Activated B cell treated with CpG ODN at 0.5 μM for 24 hours (primary cell): ENCODE measurements at regions of chr4 and their contacts with region 1.

Region 1: DNA sequence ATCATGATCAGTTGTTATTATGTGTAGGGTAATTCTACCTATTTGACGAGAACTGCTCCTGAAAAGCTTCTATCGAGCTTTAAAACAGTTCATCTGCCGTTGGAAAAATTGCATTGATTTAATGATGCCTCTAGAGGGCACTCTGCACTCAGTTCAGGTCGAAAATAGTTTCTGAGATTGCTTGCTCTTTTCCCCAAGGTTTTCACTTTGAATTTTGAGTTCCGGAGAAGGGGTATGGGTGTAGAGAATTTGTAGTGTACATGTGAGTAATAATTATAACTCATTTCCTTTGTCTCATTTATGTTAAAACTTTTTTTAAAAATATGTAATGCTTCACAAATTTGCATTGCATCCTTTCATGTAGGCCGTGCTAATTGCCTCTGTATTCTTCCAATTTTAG is 28.4 kb upstream of the TNIP3 start:
- DNase-seq: no peak
- ATAC-seq: peak; percentile 37
- H3K4me3 Mint-ChIP-seq: no peak overlapping the region
- H3K27ac Mint-ChIP-seq: no peak overlapping the region
- H3K4me1 Mint-ChIP-seq: peaks cover 3% of the 10 kb centered on the region
- H3K27me3 Mint-ChIP-seq: no peaks in the 10 kb centered on the region
- CTCF ChIP-seq: peak; percentile 66

Region 2: DNA sequence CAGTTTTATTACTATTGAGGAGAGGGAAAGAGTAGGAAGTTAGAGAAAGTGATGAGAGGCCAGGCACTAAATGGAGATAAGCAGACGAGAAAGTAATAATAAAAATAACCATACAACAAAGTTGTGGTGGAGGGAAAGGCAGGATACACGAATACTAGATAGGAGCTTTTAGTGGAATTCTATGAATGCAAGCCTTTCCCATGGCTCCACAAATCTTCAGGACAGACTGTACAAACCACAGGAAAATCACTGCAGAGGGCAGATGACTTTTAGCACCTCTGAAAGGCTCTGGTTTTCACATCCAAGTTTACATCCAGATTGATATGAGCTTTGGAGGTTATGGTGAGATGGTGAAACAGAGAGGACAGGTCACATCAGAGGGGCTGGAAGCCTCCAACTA is 69.8 kb before region 1 on chr4:
- CTCF ChIA-PET with region 1: no interaction called
- POLR2A ChIA-PET with region 1: no interaction called
- intact Hi-C with region 1: no loop called
- DNase-seq: no peak
- ATAC-seq: no peak
- H3K4me3 Mint-ChIP-seq: no peak overlapping the region
- H3K27ac Mint-ChIP-seq: no peak overlapping the region
- H3K4me1 Mint-ChIP-seq: no peaks in the 10 kb centered on the region
- H3K27me3 Mint-ChIP-seq: no peaks in the 10 kb centered on the region
- CTCF ChIP-seq: no peak

Region 3: GRCh38 chr4:121164291-121164690 is 28.2 kb before region 1 on chr4 and contains the start of gene TNIP3:
- CTCF ChIA-PET with region 1: no interaction called
- POLR2A ChIA-PET with region 1: no interaction called
- intact Hi-C with region 1: no loop called
- DNase-seq: no peak
- ATAC-seq: no peak
- H3K4me3 Mint-ChIP-seq: no peak within 1 kb of the TSS
- H3K27ac Mint-ChIP-seq: no peak within 1 kb of the TSS
- H3K4me1 Mint-ChIP-seq: no peaks in the 10 kb centered on the region
- H3K27me3 Mint-ChIP-seq: peaks cover 3% of the 10 kb centered on the region
- CTCF ChIP-seq: no peak
- total RNA-seq, gene TNIP3: 0.15 TPM in 1 of 2 replicates, not detected in the other

Region 4: DNA sequence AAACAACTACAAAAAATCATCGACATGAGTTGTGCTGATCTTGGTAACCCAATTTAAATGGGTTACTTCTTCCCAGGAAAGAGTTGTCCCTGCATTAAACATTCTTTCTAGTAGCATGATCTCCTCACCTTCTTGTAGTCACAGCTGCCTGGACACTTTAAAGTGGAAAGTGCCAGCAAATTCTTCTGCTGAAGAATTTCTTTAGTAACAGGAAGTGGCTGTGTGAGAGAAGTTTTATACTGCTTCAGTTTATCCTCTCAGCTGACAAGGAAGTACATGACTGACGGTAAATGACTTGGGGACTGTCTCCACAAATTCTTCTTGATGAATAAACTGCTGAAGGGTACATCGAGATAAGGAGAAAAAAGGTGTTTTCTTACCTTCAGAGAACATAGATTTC is 10.2 kb before region 1 on chr4:
- CTCF ChIA-PET with region 1: interaction called, 14 read pairs
- POLR2A ChIA-PET with region 1: no interaction called
- intact Hi-C with region 1: no loop called
- DNase-seq: no peak
- ATAC-seq: no peak
- H3K4me3 Mint-ChIP-seq: no peak overlapping the region
- H3K27ac Mint-ChIP-seq: no peak overlapping the region
- H3K4me1 Mint-ChIP-seq: peaks cover 4% of the 10 kb centered on the region
- H3K27me3 Mint-ChIP-seq: no peaks in the 10 kb centered on the region
- CTCF ChIP-seq: no peak

Region 5: DNA sequence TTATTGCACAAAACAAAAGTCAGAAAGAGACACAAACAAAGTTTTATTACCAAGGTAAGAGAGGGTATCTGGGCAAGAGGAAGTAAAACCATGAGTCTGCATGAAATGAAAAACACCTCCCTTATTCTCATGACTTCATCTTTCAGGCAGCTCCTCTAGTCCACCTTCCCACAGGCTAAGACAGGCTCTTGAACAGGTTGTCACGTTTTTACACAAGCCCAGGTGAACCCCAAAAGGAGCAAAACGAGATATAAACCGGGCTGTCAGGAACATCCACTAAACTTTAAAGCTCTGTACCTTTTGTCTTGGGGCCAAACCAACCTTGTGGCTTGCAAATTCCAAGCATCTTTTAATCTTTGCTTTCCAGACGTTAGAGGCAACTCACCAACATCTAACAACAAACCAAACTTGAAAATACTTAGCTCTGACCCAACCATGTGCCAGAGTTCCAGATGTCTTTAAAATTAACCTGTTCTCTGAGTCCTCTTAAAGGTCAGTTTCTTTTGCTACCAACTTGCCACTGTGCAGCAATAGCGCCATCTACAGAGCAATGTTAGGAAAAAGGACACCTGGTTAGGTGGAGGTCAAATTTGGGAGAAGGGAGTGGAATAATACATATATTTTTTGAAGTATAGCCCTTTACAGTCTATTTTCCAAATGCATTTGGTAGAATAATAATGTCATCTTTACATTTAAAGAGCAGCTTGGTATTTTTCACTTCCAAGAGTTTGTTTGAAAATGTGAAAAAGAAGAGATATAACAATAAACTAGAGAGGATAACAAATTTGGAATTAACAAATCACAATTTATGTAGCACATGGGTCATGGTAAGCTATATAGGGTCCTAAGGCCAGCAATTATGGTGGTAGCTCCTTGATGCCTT is 115.2 kb after region 1 on chr4:
- CTCF ChIA-PET with region 1: no interaction called
- POLR2A ChIA-PET with region 1: no interaction called
- intact Hi-C with region 1: loop called (anchors 5 kb)
- DNase-seq: no peak
- ATAC-seq: no peak
- H3K4me3 Mint-ChIP-seq: no peak overlapping the region
- H3K27ac Mint-ChIP-seq: no peak overlapping the region
- H3K4me1 Mint-ChIP-seq: peaks cover 3% of the 10 kb centered on the region
- H3K27me3 Mint-ChIP-seq: peaks cover 2% of the 10 kb centered on the region
- CTCF ChIP-seq: no peak